ENCODE measurements at regions of chr9 and their contacts with region 1.

Region 1: GRCh38 chr9:113591001-113591898 is 127.7 kb downstream of the RGS3 start:
- DNase-seq: peak; percentile 64 to 80 (median 75)
- H3K4me3 ChIP-seq: no peak overlapping the region
- H3K27ac ChIP-seq: peak overlapping the region in 1 of 2 experiments; percentile 50
- H3K4me1 ChIP-seq: peaks cover 16 to 86% (median 80%) of the 10 kb centered on the region in 4 experiments
- H3K27me3 ChIP-seq: no peaks in the 10 kb centered on the region

Region 2: GRCh38 chr9:113401027-113401792 is 190.0 kb before region 1 on chr9 and contains the start of gene ALAD:
- CTCF ChIA-PET with region 1: interaction called, 69 read pairs
- POLR2A ChIA-PET with region 1: interaction called, 4 read pairs
- DNase-seq: peak; percentile 99
- H3K4me3 ChIP-seq: peak within 1 kb of the TSS; percentile 66 to 96 (median 92)
- H3K27ac ChIP-seq: peak within 1 kb of the TSS; percentile 40 to 66
- H3K4me1 ChIP-seq: peaks cover 4 to 22% (median 17%) of the 10 kb centered on the region in 4 experiments
- H3K27me3 ChIP-seq: no peaks in the 10 kb centered on the region

Region 3: GRCh38 chr9:113446323-113446740 is 144.9 kb before region 1 on chr9:
- CTCF ChIA-PET with region 1: interaction called, 100 read pairs
- POLR2A ChIA-PET with region 1: no interaction called
- DNase-seq: peak; percentile 21 to 47 (median 45)
- H3K4me3 ChIP-seq: no peak overlapping the region
- H3K27ac ChIP-seq: no peak overlapping the region
- H3K4me1 ChIP-seq: peaks cover 4 to 18% (median 16%) of the 10 kb centered on the region in 4 experiments
- H3K27me3 ChIP-seq: no peaks in the 10 kb centered on the region

Region 4: GRCh38 chr9:113516840-113517577 is 74.2 kb before region 1 on chr9:
- CTCF ChIA-PET with region 1: interaction called, 11 read pairs
- POLR2A ChIA-PET with region 1: no interaction called
- DNase-seq: peak; percentile 36 to 89 (median 84)
- H3K4me3 ChIP-seq: peak overlapping the region in 3 of 7 experiments; percentile 40 to 49 (median 45)
- H3K27ac ChIP-seq: peak overlapping the region in 1 of 2 experiments; percentile 50
- H3K4me1 ChIP-seq: peaks cover 9 to 28% (median 22%) of the 10 kb centered on the region in 4 experiments
- H3K27me3 ChIP-seq: no peaks in the 10 kb centered on the region

Region 5: GRCh38 chr9:113578882-113579282 is 12.4 kb before region 1 on chr9:
- CTCF ChIA-PET with region 1: interaction called, 35 read pairs
- POLR2A ChIA-PET with region 1: no interaction called
- DNase-seq: peak; percentile 73 to 96 (median 94)
- H3K4me3 ChIP-seq: peak overlapping the region in 3 of 7 experiments; percentile 26 to 28 (median 26)
- H3K27ac ChIP-seq: peak overlapping the region; percentile 27 to 44
- H3K4me1 ChIP-seq: peaks cover 24 to 65% (median 57%) of the 10 kb centered on the region in 4 experiments
- H3K27me3 ChIP-seq: no peaks in the 10 kb centered on the region

Region 6: DNA sequence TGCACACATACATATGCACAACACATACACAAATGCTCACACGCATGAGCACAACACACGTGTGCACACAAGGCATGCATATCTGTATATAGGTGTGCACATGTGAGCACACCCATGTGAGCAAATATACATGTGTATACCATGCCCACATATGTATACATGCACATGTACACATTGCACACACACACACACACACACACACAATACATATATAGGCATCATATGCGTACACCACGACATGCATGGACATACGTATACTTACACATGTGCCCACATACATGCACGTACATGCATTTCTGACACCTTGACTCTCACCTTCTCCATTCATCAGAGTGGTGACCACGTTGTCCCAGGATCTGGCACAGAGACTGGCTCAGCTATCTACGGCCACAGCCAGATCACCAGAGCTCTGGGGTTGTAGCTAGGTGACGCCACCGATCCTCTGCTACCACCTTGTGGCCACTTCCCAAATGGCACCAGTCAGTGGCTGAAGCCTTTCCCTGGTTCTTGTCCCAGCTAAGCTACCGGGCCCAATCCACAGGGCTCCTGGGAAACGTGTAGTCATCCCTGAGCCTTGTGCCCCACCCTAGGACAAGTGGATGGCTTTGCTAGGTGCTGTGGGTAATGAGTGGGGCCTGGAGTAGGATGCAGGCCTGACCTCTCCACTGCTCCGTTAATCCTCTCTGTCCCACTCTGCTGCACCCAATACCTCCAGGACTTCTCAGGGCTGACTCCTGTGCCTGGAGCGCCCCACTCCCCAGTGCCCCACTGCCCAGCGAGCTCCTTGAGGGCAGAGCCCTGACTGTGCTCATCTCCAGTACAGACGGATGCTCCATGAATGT is 66.7 kb after region 1 on chr9:
- CTCF ChIA-PET with region 1: interaction called, 494 read pairs
- POLR2A ChIA-PET with region 1: interaction called, 4 read pairs
- DNase-seq: peak; percentile 76 to 87 (median 82)
- H3K4me3 ChIP-seq: no peak overlapping the region
- H3K27ac ChIP-seq: no peak overlapping the region
- H3K4me1 ChIP-seq: peaks cover 0 to 17% (median 8%) of the 10 kb centered on the region in 4 experiments
- H3K27me3 ChIP-seq: no peaks in the 10 kb centered on the region

Measured in common myeloid progenitor, CD34-positive (primary cell).